WTC11 (cell line): ENCODE measurements at regions of chr10 and their contacts with region 1.

Region 1: GRCh38 chr10:113678690-113679462 is 836 bp upstream of the CASP7 start:
- DNase-seq: peak; percentile 80
- ATAC-seq: peak; percentile 48
- H3K4me3 Mint-ChIP-seq: peak overlapping the region; percentile 87
- H3K27ac Mint-ChIP-seq: no peak overlapping the region
- H3K4me1 Mint-ChIP-seq: peaks cover 14% of the 10 kb centered on the region
- H3K27me3 Mint-ChIP-seq: peaks cover 25% of the 10 kb centered on the region
- CTCF ChIP-seq: peak; percentile 52

Region 2: DNA sequence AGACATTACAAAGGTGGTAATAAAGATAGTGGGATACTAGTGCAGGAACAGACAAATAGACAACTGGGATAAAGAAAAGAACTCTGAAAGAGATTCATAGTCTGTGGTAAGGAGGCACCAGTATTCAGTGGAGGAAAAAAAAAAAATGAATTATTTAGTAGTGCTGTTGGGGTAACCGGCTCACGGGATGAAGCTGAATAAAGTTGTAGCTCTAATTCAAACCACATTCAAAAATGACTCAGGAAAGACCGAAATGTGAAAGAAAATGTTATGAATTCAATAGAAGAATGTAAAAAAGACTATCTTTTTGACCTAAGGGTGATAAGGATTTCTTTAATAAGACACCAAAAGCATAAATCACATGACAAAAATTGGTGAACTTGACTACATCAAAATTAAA is 209.1 kb before region 1 on chr10:
- CTCF ChIA-PET with region 1: no interaction called
- POLR2A ChIA-PET with region 1: no interaction called
- DNase-seq: no peak
- ATAC-seq: no peak
- H3K4me3 Mint-ChIP-seq: no peak overlapping the region
- H3K27ac Mint-ChIP-seq: no peak overlapping the region
- H3K4me1 Mint-ChIP-seq: peaks cover 6% of the 10 kb centered on the region; the same call in 1 of the 2 replicates
- H3K27me3 Mint-ChIP-seq: no peaks in the 10 kb centered on the region; the same call in 1 of the 2 replicates
- CTCF ChIP-seq: no peak

Region 3: GRCh38 chr10:113616233-113617074 is 62.4 kb before region 1 on chr10:
- CTCF ChIA-PET with region 1: interaction called, 15 read pairs
- POLR2A ChIA-PET with region 1: no interaction called
- DNase-seq: no peak
- ATAC-seq: peak; percentile 60
- H3K4me3 Mint-ChIP-seq: peak overlapping the region; percentile 59
- H3K27ac Mint-ChIP-seq: peak overlapping the region; percentile 61
- H3K4me1 Mint-ChIP-seq: peaks cover 79% of the 10 kb centered on the region
- H3K27me3 Mint-ChIP-seq: peaks cover 38% of the 10 kb centered on the region
- CTCF ChIP-seq: peak; percentile 33

Region 4: DNA sequence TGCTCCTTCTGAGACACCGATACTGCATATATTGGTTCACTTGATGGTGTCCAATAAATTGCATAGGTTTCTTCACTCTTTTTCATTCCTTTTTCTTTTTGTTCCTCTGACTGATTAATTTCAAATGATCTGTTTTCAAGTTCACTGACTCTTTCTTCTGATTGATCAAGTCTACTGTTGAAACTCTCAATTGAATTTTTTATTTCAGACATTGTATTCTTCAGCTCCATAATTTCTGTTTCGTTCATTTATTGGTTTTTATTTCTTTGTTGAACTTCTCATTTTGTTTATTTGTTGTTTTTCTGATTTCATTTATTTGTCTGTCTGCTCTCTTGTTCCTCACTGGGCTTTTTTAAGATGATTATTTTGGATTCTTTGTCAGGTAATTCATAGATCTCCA is 14.5 kb after region 1 on chr10:
- CTCF ChIA-PET with region 1: interaction called, 10 read pairs
- POLR2A ChIA-PET with region 1: no interaction called
- DNase-seq: no peak
- ATAC-seq: no peak
- H3K4me3 Mint-ChIP-seq: no peak overlapping the region
- H3K27ac Mint-ChIP-seq: no peak overlapping the region
- H3K4me1 Mint-ChIP-seq: peaks cover 22% of the 10 kb centered on the region
- H3K27me3 Mint-ChIP-seq: peaks cover 7% of the 10 kb centered on the region
- CTCF ChIP-seq: no peak

Region 5: DNA sequence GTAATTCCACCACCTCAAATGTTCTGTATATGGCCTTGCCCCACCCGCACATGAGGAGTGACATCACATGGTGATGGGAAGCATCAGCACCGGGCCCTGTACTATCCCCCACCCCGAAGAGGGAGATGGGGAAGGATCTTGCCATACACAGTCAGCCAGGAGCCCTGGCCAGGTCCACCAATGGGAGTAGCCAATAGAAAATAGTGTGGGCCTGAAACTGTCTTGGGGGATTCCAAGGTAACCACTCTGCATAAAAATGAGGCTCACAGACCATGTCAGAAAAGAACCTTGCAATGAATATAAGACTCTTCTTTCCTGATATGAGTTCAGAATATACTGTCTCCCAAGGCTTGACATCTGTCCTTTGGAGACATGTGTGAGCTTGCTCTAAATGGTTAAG is 415.9 kb after region 1 on chr10:
- CTCF ChIA-PET with region 1: no interaction called
- POLR2A ChIA-PET with region 1: no interaction called
- DNase-seq: no peak
- ATAC-seq: no peak
- H3K4me3 Mint-ChIP-seq: no peak overlapping the region
- H3K27ac Mint-ChIP-seq: no peak overlapping the region
- H3K4me1 Mint-ChIP-seq: no peaks in the 10 kb centered on the region
- H3K27me3 Mint-ChIP-seq: peaks cover 6% of the 10 kb centered on the region
- CTCF ChIP-seq: no peak